CD14-positive monocyte (primary cell): ENCODE measurements at regions of chr9 and their contacts with region 1.

Region 1: GRCh38 chr9:128218518-128219389 is 15.6 kb downstream of the DNM1 start:
- DNase-seq: peak; percentile 95 to 98 (median 97)
- H3K4me3 ChIP-seq: peak overlapping the region; percentile 21 to 77 (median 44)
- H3K4me3 Mint-ChIP-seq: peak overlapping the region; percentile 81 to 88
- H3K27ac ChIP-seq: peak overlapping the region; percentile 8 to 76
- H3K27ac Mint-ChIP-seq: peak overlapping the region; percentile 51 to 91 (median 88)
- H3K4me1 ChIP-seq: peaks cover 18 to 24% of the 10 kb centered on the region in 2 donors
- H3K4me1 Mint-ChIP-seq: peaks cover 25% of the 10 kb centered on the region
- H3K27me3 ChIP-seq: no peaks in the 10 kb centered on the region
- H3K27me3 Mint-ChIP-seq: peaks cover 0 to 1% (median 1%) of the 10 kb centered on the region in 3 donors
- CTCF ChIP-seq: peak; percentile 13

Region 2: GRCh38 chr9:128159784-128160602 is 58.8 kb before region 1 on chr9 and contains the start of gene BBLN:
- intact Hi-C with region 1: loop called in 1 of 2 experiments (anchors 2 kb)
- DNase-seq: peak; percentile 77 to 83 (median 83)
- H3K4me3 ChIP-seq: peak within 1 kb of the TSS; percentile 82 to 94 (median 85)
- H3K4me3 Mint-ChIP-seq: peak within 1 kb of the TSS; percentile 79 to 86
- H3K27ac ChIP-seq: peak within 1 kb of the TSS; percentile 56 to 80
- H3K27ac Mint-ChIP-seq: peak within 1 kb of the TSS; percentile 37 to 92 (median 76)
- H3K4me1 ChIP-seq: peaks cover 16 to 20% of the 10 kb centered on the region in 2 donors
- H3K4me1 Mint-ChIP-seq: peaks cover 15% of the 10 kb centered on the region
- H3K27me3 ChIP-seq: no peaks in the 10 kb centered on the region
- H3K27me3 Mint-ChIP-seq: peaks cover 0 to 5% (median 1%) of the 10 kb centered on the region in 3 donors
- CTCF ChIP-seq: no peak
- polyA plus RNA-seq, gene BBLN: 51.5 to 74.8 (median 54.5) TPM

Region 3: GRCh38 chr9:128249908-128250838 is 31.4 kb after region 1 on chr9:
- intact Hi-C with region 1: loop called in 1 of 2 experiments (anchors 1 kb)
- DNase-seq: peak; percentile 80 to 88 (median 81)
- H3K4me3 ChIP-seq: peak overlapping the region in 2 of 3 experiments; percentile 9 to 74
- H3K4me3 Mint-ChIP-seq: peak overlapping the region; percentile 59 to 81
- H3K27ac ChIP-seq: no peak overlapping the region
- H3K27ac Mint-ChIP-seq: peak overlapping the region in 3 of 7 donors; percentile 26 to 63 (median 62)
- H3K4me1 ChIP-seq: peaks cover 24 to 33% of the 10 kb centered on the region in 2 donors
- H3K4me1 Mint-ChIP-seq: peaks cover 28% of the 10 kb centered on the region
- H3K27me3 ChIP-seq: peaks cover 0 to 13% of the 10 kb centered on the region in 2 donors
- H3K27me3 Mint-ChIP-seq: peaks cover 19 to 30% (median 29%) of the 10 kb centered on the region in 3 donors
- CTCF ChIP-seq: no peak